A549 (cell line): ENCODE measurements at regions of chr6 and their contacts with region 1.

Region 1: GRCh38 chr6:43170417-43171283 is at the start of gene SRF:
- DNase-seq: peak; percentile 67 to 98
- ATAC-seq: peak; percentile 75 to 81
- H3K4me3 ChIP-seq: peak within 1 kb of the TSS; percentile 92
- H3K27ac ChIP-seq: peak within 1 kb of the TSS; percentile 92 to 100
- H3K4me1 ChIP-seq: peaks cover 30% of the 10 kb centered on the region
- CTCF ChIP-seq: no peak
- EP300 ChIP-seq: no peak
- POLR2A ChIP-seq: peak; percentile 39; the same call in 1 of the 2 replicates
- RAD21 ChIP-seq: no peak
- polyA plus RNA-seq, gene SRF: 16.2 and 16.7 TPM in 2 replicates

Region 2: GRCh38 chr6:43181942-43182860 is 11.6 kb after region 1 on chr6 and contains the start of gene CUL9:
- CTCF ChIA-PET with region 1: interaction called, 12 read pairs
- POLR2A ChIA-PET with region 1: interaction called, 3 read pairs
- DNase-seq: peak; percentile 44 to 66
- ATAC-seq: peak; percentile 94 to 95
- H3K4me3 ChIP-seq: peak within 1 kb of the TSS; percentile 77
- H3K27ac ChIP-seq: peak within 1 kb of the TSS; percentile 84 to 97
- H3K4me1 ChIP-seq: peaks cover 13% of the 10 kb centered on the region; the same call in 2 of the 3 replicates
- CTCF ChIP-seq: no peak
- EP300 ChIP-seq: no peak
- POLR2A ChIP-seq: peak; percentile 63
- RAD21 ChIP-seq: no peak
- polyA plus RNA-seq, gene CUL9: 11.0 and 11.3 TPM in 2 replicates